IMR-90 (cell line): ENCODE measurements at regions of chr5 and their contacts with region 1.

Region 1: GRCh38 chr5:9207817-9208418 is 338.0 kb downstream of the SEMA5A start:
- DNase-seq: peak; percentile 69
- ATAC-seq: peak; percentile 86
- H3K4me3 ChIP-seq: no peak overlapping the region
- H3K27ac ChIP-seq: no peak overlapping the region
- H3K4me1 ChIP-seq: peaks cover 4% of the 10 kb centered on the region; the same call in 1 of the 2 replicates
- H3K27me3 ChIP-seq: no peaks in the 10 kb centered on the region
- CTCF ChIP-seq: peak; percentile 69
- POLR2A ChIP-seq: no peak; the same call in 1 of the 2 replicates
- RAD21 ChIP-seq: peak; percentile 87

Region 2: DNA sequence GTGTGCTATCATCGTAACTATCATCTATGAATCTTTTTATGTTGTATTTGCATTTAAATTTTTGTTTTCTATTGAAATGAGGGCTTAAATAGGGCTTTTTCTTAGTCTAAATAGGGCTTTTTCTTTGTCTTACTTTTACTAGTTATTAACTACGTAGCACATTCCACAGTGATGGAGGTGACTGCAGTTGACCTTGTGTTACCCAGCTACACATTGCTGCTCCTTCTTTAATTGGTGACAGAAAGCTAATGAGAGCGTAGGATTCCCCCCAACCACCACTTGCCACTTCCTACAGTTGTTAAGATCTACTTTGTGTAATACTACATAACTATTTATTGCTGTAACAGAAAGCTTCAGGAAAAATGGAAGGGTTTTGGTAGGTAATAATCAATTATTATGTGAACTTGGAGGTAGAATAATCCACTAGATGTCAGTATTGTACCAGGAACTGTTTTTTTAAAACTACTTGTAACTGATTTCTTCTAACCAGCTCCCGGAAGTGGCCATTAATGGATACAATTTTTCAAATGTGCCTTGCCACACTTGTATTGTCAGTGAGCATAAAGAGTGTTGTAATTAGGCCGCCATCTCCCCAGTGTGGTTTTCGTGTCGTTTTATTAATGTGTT is 1321.0 kb before region 1 on chr5:
- CTCF ChIA-PET with region 1: no interaction called
- POLR2A ChIA-PET with region 1: no interaction called
- dilution Hi-C with region 1: no loop called
- in situ Hi-C with region 1: no loop called
- intact Hi-C with region 1: loop called (anchors 5 kb)
- DNase-seq: peak; percentile 72
- ATAC-seq: peak; percentile 76
- H3K4me3 ChIP-seq: no peak overlapping the region
- H3K27ac ChIP-seq: peak overlapping the region; percentile 40; the same call in 1 of the 2 replicates
- H3K4me1 ChIP-seq: peaks cover 4% of the 10 kb centered on the region
- H3K27me3 ChIP-seq: no peaks in the 10 kb centered on the region
- CTCF ChIP-seq: peak; percentile 72
- POLR2A ChIP-seq: no peak
- RAD21 ChIP-seq: peak; percentile 73

Region 3: DNA sequence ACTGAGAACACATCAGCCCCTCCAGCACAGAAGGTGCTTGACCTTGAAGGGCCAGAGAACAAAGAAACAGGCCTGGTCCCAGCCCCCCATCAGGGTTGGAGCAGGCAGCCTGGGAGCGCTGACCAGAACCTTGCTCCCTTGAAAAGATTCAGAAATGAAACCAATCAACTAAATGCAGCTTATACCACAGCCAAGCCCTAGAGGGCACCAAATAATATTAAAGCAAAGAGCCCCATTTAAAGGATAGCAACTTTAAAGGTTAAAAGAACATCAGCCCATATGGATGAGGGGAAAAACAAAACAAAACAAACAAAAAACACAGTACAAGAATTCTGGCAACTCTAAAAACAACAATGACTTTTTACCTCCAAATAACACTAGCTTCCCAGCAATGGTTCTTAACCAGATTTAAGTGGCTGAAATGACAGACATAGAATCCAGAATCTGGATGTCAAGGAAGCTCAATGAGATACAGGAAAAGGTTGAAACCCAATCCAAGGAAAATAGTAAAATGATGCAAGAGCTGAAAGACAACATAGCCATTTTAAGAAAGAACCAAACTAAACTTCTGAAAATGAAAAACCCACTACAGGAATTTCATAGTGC is 867.1 kb before region 1 on chr5:
- CTCF ChIA-PET with region 1: interaction called, 5 read pairs
- POLR2A ChIA-PET with region 1: no interaction called
- dilution Hi-C with region 1: no loop called
- in situ Hi-C with region 1: loop called (anchors 10 kb)
- intact Hi-C with region 1: loop called (anchors 10 kb)
- DNase-seq: peak; percentile 23
- ATAC-seq: peak; percentile 94
- H3K4me3 ChIP-seq: no peak overlapping the region
- H3K27ac ChIP-seq: no peak overlapping the region
- H3K4me1 ChIP-seq: no peaks in the 10 kb centered on the region
- H3K27me3 ChIP-seq: no peaks in the 10 kb centered on the region; the same call in 1 of the 2 replicates
- CTCF ChIP-seq: peak; percentile 62
- POLR2A ChIP-seq: no peak
- RAD21 ChIP-seq: peak; percentile 58

Region 4: DNA sequence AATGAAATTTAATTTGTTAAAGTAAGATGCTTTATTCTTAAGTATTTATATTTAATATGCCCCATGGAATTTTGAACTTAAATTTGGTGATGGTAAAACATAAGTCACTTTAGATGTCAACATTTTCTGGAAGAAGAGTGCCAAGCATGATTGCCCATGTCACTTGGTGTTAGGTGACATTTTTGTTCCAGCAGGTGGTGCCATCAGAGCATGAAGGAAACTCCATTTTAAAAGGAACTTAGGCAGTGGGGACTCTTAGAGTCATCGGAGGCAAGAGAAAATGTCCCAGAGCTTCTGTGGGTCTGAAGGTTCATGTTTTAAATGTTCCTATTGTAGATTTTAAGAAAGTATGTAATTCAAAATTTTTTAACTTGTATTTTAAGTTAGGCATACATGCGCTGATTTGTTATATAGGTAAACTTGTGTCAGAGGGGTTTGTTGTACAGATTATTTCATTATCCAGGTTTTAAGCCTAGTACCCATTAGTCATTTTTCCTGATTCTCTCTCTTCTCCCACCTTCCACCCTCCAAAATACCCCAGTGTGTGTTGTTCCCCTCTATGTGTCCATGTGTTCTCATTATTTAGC is 451.3 kb before region 1 on chr5:
- CTCF ChIA-PET with region 1: no interaction called
- POLR2A ChIA-PET with region 1: no interaction called
- dilution Hi-C with region 1: no loop called
- in situ Hi-C with region 1: loop called (anchors 5 kb)
- intact Hi-C with region 1: loop called (anchors 1 kb)
- DNase-seq: peak; percentile 60
- ATAC-seq: peak; percentile 63; the same call in 1 of the 2 replicates
- H3K4me3 ChIP-seq: no peak overlapping the region
- H3K27ac ChIP-seq: no peak overlapping the region
- H3K4me1 ChIP-seq: peaks cover 2% of the 10 kb centered on the region; the same call in 1 of the 2 replicates
- H3K27me3 ChIP-seq: no peaks in the 10 kb centered on the region
- CTCF ChIP-seq: peak; percentile 59
- POLR2A ChIP-seq: no peak
- RAD21 ChIP-seq: peak; percentile 81

Region 5: GRCh38 chr5:9324348-9325077 is 116.6 kb after region 1 on chr5:
- CTCF ChIA-PET with region 1: no interaction called
- POLR2A ChIA-PET with region 1: no interaction called
- dilution Hi-C with region 1: no loop called
- in situ Hi-C with region 1: no loop called
- intact Hi-C with region 1: no loop called
- DNase-seq: peak; percentile 9
- ATAC-seq: no peak
- H3K4me3 ChIP-seq: no peak overlapping the region
- H3K27ac ChIP-seq: no peak overlapping the region
- H3K4me1 ChIP-seq: peaks cover 1% of the 10 kb centered on the region; the same call in 1 of the 2 replicates
- H3K27me3 ChIP-seq: no peaks in the 10 kb centered on the region
- CTCF ChIP-seq: no peak
- POLR2A ChIP-seq: no peak
- RAD21 ChIP-seq: no peak

Region 6: DNA sequence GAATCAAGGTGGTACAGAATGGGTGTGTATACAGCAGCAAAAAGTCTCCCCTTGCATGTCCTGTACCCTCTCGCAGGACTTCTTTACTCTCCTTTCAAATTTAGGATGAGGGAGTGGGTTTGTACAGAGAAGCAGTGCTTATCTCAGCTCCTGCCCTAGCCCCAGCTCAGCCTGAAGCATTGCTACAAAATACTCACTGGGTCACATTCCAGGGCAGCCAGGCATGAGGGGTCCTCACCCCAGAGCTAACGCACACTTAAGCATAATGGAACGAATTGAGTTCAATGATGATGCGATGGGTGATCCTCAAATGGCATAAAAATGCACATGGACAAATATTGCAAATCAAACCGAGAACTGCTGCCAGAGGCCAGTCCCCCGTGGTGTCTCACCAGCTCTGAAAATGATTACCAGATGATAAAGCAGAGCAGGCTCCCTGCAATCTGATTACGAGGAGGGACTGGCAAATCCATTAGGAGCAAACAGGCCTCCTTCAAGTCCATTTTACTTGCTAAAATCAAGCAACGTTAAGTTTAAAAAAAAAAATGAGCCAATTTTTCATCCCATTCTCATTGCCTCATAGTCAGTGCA is 653.8 kb after region 1 on chr5:
- CTCF ChIA-PET with region 1: no interaction called
- POLR2A ChIA-PET with region 1: no interaction called
- dilution Hi-C with region 1: no loop called
- in situ Hi-C with region 1: no loop called
- intact Hi-C with region 1: no loop called
- DNase-seq: peak; percentile 33
- ATAC-seq: no peak
- H3K4me3 ChIP-seq: no peak overlapping the region
- H3K27ac ChIP-seq: no peak overlapping the region
- H3K4me1 ChIP-seq: no peaks in the 10 kb centered on the region
- H3K27me3 ChIP-seq: peaks cover 12% of the 10 kb centered on the region
- CTCF ChIP-seq: no peak
- POLR2A ChIP-seq: no peak
- RAD21 ChIP-seq: no peak

Region 7: GRCh38 chr5:10145923-10146401 is 938.0 kb after region 1 on chr5:
- CTCF ChIA-PET with region 1: no interaction called
- POLR2A ChIA-PET with region 1: no interaction called
- dilution Hi-C with region 1: no loop called
- in situ Hi-C with region 1: no loop called
- intact Hi-C with region 1: loop called (anchors 10 kb)
- DNase-seq: peak; percentile 66
- ATAC-seq: peak; percentile 71
- H3K4me3 ChIP-seq: no peak overlapping the region
- H3K27ac ChIP-seq: no peak overlapping the region
- H3K4me1 ChIP-seq: no peaks in the 10 kb centered on the region
- H3K27me3 ChIP-seq: no peaks in the 10 kb centered on the region; the same call in 1 of the 2 replicates
- CTCF ChIP-seq: peak; percentile 55
- POLR2A ChIP-seq: no peak
- RAD21 ChIP-seq: peak; percentile 65